ENCODE measurements at regions of chr4 and their contacts with region 1.

Region 1: GRCh38 chr4:159498446-159499115 is 395.7 kb downstream of the RAPGEF2 start:
- H3K4me3 ChIP-seq: no peak overlapping the region
- H3K27ac ChIP-seq: no peak overlapping the region
- H3K4me1 ChIP-seq: no peaks in the 10 kb centered on the region
- CTCF ChIP-seq: no peak

Region 2: DNA sequence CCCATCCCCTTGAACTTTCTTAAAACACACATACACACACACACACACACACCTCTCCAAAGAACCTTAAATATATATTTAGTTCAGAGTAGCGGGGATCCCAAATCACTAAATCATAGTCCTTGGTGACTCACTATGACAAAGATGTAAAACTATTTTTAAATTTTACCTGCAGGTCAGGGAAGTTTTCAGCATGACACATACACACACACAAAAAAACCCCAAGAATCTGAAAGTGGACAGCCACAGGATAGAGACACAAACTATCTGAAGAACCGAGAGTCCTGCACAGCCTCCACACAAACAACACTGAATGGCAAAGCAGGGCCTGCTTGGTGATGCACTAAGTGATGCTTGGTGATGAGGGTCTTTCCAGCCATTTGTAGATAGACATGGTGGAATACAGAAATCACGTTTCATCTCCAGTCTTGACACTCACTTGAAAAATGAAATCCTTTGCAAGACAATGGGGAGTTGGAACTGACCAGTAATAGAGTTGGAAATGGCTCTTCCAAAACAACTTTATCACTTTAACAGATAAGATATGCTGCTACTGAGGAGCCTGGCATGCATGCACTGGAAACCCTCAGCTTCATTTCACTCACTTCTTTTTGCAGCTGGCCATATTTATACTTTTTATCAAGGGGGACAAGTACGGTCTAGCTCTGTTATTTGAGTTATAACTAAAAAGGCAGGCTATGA is 88.4 kb before region 1 on chr4:
- CTCF ChIA-PET with region 1: no interaction called
- POLR2A ChIA-PET with region 1: no interaction called
- H3K4me3 ChIP-seq: no peak overlapping the region
- H3K27ac ChIP-seq: no peak overlapping the region
- H3K4me1 ChIP-seq: no peaks in the 10 kb centered on the region
- CTCF ChIP-seq: no peak

Region 3: DNA sequence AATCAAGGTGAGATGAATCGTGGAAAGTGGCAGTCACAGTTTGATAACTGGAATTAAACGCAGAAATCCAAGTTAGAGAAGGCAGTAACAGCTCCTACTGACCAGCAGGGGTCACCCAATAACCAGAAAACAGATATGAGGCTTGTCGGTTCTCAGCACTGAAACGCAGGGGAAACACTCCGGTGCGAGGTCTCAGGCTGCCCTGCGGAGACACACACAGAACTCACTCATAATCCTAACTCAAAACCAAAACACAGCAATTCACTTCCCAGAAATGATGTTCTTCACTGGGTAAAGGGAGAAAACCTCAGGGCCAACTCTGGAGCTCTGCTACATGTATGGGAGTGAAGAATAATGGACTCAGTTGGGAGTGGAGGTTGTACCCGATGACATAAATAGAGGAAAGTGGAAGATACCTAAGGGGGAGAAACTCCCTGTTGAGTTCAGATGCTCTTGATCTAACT is 11.3 kb before region 1 on chr4:
- CTCF ChIA-PET with region 1: interaction called, 18 read pairs
- POLR2A ChIA-PET with region 1: no interaction called
- H3K4me3 ChIP-seq: no peak overlapping the region
- H3K27ac ChIP-seq: no peak overlapping the region
- H3K4me1 ChIP-seq: no peaks in the 10 kb centered on the region
- CTCF ChIP-seq: no peak

Measured in HEK293 (cell line).